Activated CD4-positive, alpha-beta T cell treated with anti-CD3 and anti-CD28 coated beads for 36 hours (primary cell): ENCODE measurements at regions of chr1 and their contacts with region 1.

Region 1: GRCh38 chr1:13725714-13726175 is 25.8 kb downstream of the PRDM2 start:
- DNase-seq: peak; percentile 75
- ATAC-seq: peak; percentile 40
- H3K4me3 Mint-ChIP-seq: no peak overlapping the region
- H3K27ac Mint-ChIP-seq: no peak overlapping the region
- H3K4me1 Mint-ChIP-seq: peaks cover 47% of the 10 kb centered on the region
- H3K27me3 Mint-ChIP-seq: no peaks in the 10 kb centered on the region

Region 2: DNA sequence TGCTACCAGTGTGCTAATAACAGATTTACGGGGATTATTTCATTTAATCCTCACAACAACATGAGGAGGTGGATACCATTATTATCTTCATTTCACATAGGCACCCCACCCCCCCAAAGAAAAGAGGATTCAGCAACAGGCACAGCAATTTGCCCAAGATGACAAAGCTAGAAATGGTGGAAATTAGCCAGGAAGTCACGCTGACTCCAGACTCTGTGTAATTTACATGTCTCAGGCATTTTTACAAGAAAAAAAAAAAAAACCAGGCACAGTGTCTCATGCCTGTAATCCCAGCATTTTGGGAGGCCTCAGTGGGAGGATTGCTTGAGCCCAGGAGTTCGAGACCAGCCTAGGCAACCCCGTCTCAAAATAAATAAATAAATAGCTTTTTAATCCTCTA is 63.3 kb before region 1 on chr1:
- CTCF ChIA-PET with region 1: interaction called, 6 read pairs
- POLR2A ChIA-PET with region 1: no interaction called
- intact Hi-C with region 1: loop called (anchors 1 kb)
- DNase-seq: no peak
- ATAC-seq: no peak
- H3K4me3 Mint-ChIP-seq: no peak overlapping the region
- H3K27ac Mint-ChIP-seq: no peak overlapping the region
- H3K4me1 Mint-ChIP-seq: peaks cover 4% of the 10 kb centered on the region
- H3K27me3 Mint-ChIP-seq: peaks cover 5% of the 10 kb centered on the region

Region 3: GRCh38 chr1:13707164-13707563 is 18.6 kb before region 1 on chr1:
- CTCF ChIA-PET with region 1: interaction called, 19 read pairs
- POLR2A ChIA-PET with region 1: interaction called, 3 read pairs
- intact Hi-C with region 1: loop called in 1 of 2 experiments (anchors 1 kb)
- DNase-seq: no peak
- ATAC-seq: no peak
- H3K4me3 Mint-ChIP-seq: no peak overlapping the region
- H3K27ac Mint-ChIP-seq: no peak overlapping the region
- H3K4me1 Mint-ChIP-seq: peaks cover 62% of the 10 kb centered on the region
- H3K27me3 Mint-ChIP-seq: no peaks in the 10 kb centered on the region

Region 4: DNA sequence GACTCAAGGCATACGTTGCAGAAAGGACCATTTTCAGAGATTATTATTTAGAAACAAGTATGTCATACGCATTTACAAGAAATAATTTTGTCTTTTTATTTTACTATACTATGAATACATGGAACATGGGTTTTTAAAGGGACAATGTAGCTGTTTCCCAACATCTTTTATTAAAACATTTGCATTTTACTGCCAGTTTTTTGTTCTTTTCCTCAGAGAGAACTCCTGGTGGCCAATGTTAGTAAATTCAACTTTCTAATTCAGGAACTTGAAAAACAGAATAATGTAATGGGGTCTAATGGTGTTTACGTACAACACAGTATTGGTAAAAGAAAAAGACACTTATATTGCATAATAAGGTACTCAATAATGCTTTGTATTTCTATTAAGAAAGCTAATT is 10.9 kb before region 1 on chr1:
- CTCF ChIA-PET with region 1: interaction called, 20 read pairs
- POLR2A ChIA-PET with region 1: no interaction called
- intact Hi-C with region 1: no loop called
- DNase-seq: no peak
- ATAC-seq: no peak
- H3K4me3 Mint-ChIP-seq: no peak overlapping the region
- H3K27ac Mint-ChIP-seq: no peak overlapping the region
- H3K4me1 Mint-ChIP-seq: peaks cover 23% of the 10 kb centered on the region
- H3K27me3 Mint-ChIP-seq: no peaks in the 10 kb centered on the region